Natural killer cell (primary cell): ENCODE measurements at regions of chr15 and their contacts with region 1.

Region 1: GRCh38 chr15:60649845-60650548 is 171.1 kb upstream of the ICE2 start:
- DNase-seq: peak in 1 of 2 donors; percentile 82
- ATAC-seq: peak; percentile 76 to 89 (median 85)
- H3K4me3 ChIP-seq: no peak overlapping the region
- H3K4me3 Mint-ChIP-seq: peak overlapping the region; percentile 69
- H3K27ac ChIP-seq: peak overlapping the region; percentile 54
- H3K27ac Mint-ChIP-seq: peak overlapping the region; percentile 88
- H3K4me1 ChIP-seq: peaks cover 23% of the 10 kb centered on the region
- H3K4me1 Mint-ChIP-seq: peaks cover 38 to 41% of the 10 kb centered on the region in 2 donors
- H3K27me3 ChIP-seq: no peaks in the 10 kb centered on the region
- H3K27me3 Mint-ChIP-seq: peaks cover 0 to 4% of the 10 kb centered on the region in 2 donors
- CTCF ChIP-seq: no peak

Region 2: DNA sequence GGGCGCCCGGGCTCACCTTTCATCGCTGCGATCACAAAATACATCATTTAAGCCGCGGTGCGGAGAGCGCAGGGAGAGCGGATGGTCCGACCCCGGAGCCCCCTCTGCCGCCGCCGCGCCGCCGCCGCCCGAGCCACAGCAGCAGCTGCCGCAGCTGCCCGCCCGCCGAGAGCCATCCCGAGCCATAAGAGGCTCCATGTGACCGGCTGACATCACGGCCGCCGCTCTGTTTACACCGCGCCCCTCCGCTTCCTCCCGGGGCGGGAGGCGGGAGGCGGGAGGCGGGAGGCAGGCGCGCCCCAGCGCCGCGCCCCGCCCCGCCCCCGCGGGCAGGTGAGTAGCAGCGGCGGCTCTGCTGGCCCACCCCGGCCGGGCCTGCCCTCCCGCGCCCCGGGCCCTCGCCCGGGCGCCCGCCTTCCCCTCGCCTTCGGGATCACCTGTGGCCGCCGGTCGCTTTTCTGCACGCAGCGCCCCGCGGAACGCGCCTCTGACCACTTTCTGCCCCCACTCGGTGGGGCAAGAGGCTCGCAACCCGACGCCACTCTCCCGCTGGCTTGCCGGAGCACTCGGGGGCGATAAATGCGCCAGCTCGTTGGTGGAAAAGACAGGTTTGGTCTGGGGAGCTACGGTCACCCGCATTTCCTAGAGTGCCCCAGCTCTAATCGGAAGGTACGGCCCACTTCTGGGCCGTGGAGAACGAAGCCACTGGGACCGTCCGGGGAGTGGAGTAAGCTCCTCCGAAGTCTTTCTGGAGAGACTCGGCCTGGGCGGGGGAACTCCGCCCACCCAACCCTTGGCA is 57.4 kb before region 1 on chr15:
- intact Hi-C with region 1: loop called (anchors 5 kb)
- DNase-seq: peak; percentile 73 to 92
- ATAC-seq: peak; percentile 81 to 93 (median 87)
- H3K4me3 ChIP-seq: peak overlapping the region; percentile 90
- H3K4me3 Mint-ChIP-seq: peak overlapping the region; percentile 91
- H3K27ac ChIP-seq: peak overlapping the region; percentile 86
- H3K27ac Mint-ChIP-seq: peak overlapping the region; percentile 93
- H3K4me1 ChIP-seq: peaks cover 13% of the 10 kb centered on the region
- H3K4me1 Mint-ChIP-seq: peaks cover 39 to 52% of the 10 kb centered on the region in 2 donors
- H3K27me3 ChIP-seq: no peaks in the 10 kb centered on the region
- H3K27me3 Mint-ChIP-seq: no peaks in the 10 kb centered on the region
- CTCF ChIP-seq: no peak

Region 3: DNA sequence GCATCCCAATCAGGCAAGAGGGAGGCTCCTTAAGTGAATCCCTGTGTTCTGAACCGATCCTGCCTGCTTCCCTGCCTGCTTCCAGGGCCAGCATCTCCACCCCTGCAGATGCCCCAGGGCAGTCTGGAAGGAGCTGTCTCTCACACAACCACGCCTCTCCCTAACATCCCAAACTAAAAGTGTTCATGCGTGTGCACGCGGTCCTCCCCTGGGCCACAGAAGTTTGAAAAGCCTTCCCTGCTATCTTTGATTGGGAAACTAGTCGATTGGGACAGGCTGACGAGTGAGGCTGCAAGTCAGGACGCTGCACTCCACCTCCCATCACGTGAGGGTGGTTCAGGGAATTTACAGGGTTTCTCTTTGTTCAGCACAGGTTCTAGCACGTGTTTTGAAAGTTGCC is 169.9 kb after region 1 on chr15:
- intact Hi-C with region 1: no loop called
- DNase-seq: peak in 1 of 2 donors; percentile 48
- ATAC-seq: no peak
- H3K4me3 ChIP-seq: no peak overlapping the region
- H3K4me3 Mint-ChIP-seq: no peak overlapping the region
- H3K27ac ChIP-seq: no peak overlapping the region
- H3K27ac Mint-ChIP-seq: no peak overlapping the region
- H3K4me1 ChIP-seq: no peaks in the 10 kb centered on the region
- H3K4me1 Mint-ChIP-seq: peaks cover 8 to 21% of the 10 kb centered on the region in 2 donors
- H3K27me3 ChIP-seq: no peaks in the 10 kb centered on the region
- H3K27me3 Mint-ChIP-seq: peaks cover 0 to 3% of the 10 kb centered on the region in 2 donors
- CTCF ChIP-seq: no peak